Ovary (tissue), 10 donors: ENCODE measurements at regions of chr7 and their contacts with region 1.

Region 1: DNA sequence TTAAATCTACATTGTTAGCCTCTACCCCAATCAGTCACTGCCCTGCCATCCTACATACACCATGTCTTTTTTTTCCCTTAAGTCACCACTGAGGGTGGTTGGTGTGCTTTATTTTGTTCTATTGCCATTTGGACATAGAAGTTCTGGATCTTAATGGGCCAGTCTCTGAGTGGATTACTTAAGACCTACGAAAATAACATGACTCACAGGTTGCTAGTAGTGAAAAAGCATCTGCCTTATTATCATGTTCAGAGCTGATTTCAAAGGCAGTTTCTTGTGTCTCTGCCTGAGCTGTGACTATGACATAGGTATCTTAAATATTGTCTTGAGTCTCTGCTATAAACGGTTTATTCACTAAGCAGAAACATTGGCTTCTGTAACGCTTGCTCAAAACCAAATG is 410.8 kb downstream of the MDFIC start:
- DNase-seq: no peak
- H3K4me3 ChIP-seq: no peak overlapping the region
- H3K27ac ChIP-seq: no peak overlapping the region
- H3K4me1 ChIP-seq: no peaks in the 10 kb centered on the region
- H3K27me3 ChIP-seq: no peaks in the 10 kb centered on the region
- CTCF ChIP-seq: no peak
- EP300 ChIP-seq: no peak
- POLR2A ChIP-seq: no peak

Region 2: DNA sequence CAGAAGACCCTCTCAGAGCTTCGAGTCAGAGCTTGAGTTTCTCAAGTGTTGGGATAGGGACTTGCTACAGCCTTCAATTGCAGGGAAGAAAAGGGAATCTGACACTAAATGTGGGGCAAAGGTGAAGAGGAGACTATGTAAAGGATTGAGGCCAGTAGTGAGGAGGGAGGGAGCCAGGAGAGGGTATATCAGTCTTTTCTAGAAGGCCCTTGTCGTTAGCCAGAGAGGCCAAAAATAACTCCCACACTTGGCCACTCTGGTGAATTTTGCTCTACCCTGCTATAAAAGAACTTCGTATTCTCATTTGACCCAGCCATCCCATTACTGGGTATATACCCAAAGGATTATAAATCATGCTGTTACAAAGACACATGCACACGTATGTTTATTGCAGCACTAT is 248.8 kb before region 1 on chr7:
- intact Hi-C with region 1: no loop called
- DNase-seq: no peak
- H3K4me3 ChIP-seq: no peak overlapping the region
- H3K27ac ChIP-seq: no peak overlapping the region
- H3K4me1 ChIP-seq: no peaks in the 10 kb centered on the region
- H3K27me3 ChIP-seq: no peaks in the 10 kb centered on the region
- CTCF ChIP-seq: no peak
- EP300 ChIP-seq: no peak
- POLR2A ChIP-seq: no peak

Region 3: DNA sequence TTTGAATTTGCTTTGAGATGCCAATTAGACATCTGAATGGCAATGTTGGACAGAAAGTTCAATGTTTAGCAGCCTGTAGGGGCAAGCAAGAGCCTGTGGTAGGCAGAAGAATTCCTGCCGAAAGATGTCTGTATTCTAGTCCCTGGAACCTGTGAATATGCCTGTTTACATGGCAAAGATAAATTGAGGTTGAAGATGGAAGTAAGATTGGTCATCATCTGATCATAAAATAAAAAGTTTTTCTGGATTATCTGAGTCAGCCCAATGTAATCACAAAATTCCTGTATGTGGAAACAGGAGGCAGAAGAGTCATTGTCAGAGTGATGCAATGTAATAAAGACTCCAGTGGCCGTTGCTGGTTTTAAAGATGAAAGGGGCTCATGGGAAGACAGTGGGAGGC is 19.7 kb after region 1 on chr7:
- intact Hi-C with region 1: loop called in 1 of 4 experiments (anchors 1 kb)
- DNase-seq: no peak
- H3K4me3 ChIP-seq: no peak overlapping the region
- H3K27ac ChIP-seq: no peak overlapping the region
- H3K4me1 ChIP-seq: no peaks in the 10 kb centered on the region
- H3K27me3 ChIP-seq: no peaks in the 10 kb centered on the region
- CTCF ChIP-seq: no peak
- EP300 ChIP-seq: no peak
- POLR2A ChIP-seq: no peak